ENCODE measurements at regions of chr13 and their contacts with region 1.

Region 1: DNA sequence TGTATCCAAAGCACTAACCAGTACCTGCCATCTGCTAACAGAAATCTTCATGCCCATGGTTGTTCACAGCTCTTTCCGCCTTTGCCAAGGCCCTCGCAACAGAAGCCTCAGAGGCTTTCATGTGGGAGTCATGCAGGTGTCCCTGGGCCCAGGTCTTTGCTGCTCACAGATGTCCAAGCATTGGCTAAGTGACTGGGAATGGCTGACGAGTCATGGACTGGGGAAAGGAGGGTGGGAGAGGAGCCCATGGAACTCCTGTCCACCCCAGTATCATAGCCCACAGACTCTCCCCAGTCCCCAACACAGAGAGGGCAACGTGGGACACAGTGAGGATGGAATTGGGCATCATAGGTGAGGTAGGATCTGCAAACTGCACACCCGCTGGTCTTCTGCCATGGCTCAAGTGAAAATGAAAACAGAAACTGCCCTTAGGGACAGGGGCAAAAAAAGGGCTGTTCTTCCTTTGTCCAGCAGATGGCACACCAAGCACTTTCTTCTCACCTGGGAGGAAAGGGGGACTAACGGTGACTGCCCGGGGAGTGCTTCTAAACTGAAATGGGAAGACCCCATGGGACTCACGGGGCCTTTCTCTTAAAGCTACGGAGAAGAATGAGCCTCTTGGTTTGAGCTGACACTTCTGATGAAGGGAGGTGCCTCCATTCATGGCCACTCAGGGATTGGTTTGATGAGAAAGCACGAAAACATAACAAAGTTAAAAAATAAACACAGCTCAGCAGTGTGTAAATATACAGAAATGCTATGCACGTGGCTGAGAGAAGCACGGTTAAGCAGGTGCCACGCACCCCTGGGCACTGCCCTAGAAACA is 11.1 kb upstream of the DHRS12 start:
- DNase-seq: peak; percentile 65
- H3K4me3 ChIP-seq: no peak overlapping the region
- H3K27ac ChIP-seq: no peak overlapping the region
- H3K4me1 ChIP-seq: no peaks in the 10 kb centered on the region
- H3K27me3 ChIP-seq: no peaks in the 10 kb centered on the region
- CTCF ChIP-seq: peak; percentile 69 to 81 (median 74)
- POLR2A ChIP-seq: no peak

Region 2: DNA sequence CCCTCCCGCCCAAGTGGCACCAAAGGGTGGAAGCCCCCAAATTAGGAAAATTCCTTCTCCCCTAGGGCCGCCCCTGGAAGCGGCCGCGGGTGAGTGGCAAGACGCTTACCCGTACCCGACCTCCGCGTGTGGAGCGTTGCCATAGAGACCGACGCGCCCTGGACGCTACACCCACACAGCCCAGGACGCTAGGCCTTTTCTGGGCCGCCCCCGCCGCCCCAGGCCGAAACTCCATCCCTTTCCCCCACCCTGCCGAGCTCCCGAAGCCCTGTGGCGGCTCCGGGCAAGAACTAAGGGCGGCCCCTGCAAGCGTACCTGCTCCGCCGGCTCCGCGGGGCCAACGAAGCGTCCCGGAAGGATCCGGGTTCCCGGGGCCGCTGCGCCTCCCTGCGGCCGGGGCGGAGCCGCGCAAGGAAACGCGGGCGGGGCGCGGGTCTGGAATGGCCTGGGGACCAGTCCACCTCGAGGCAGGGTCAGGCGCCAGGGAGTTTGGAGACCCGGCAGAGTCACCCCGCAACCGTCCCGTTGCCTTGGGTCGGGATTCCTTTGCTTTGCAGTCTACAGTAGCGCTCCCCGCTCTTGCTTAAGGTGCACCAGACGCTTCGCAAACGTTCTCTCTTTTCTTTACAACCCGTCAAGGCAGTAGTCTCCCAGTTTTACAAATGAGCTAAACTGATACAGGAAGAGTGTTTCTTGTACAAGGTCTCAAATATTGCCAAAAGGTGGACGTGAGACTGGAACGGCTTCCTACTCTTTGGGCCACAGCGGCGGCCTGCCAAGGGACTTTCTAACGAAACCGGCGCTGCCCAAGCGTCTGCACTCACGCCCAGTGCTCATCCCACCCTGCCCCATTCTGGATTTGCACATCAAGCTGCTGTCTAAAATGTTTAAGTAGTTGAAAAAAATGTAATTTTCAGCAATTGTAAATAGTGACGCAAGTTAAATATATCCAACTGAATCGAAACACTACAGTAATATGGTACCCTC is 314.0 kb after region 1 on chr13 and contains the start of gene NEK5:
- intact Hi-C with region 1: loop called (anchors 10 kb)
- DNase-seq: peak; percentile 47 to 49
- H3K4me3 ChIP-seq: peak within 1 kb of the TSS; percentile 49 to 64
- H3K27ac ChIP-seq: peak within 1 kb of the TSS; percentile 50
- H3K4me1 ChIP-seq: no peaks in the 10 kb centered on the region
- H3K27me3 ChIP-seq: no peaks in the 10 kb centered on the region
- CTCF ChIP-seq: peak; percentile 62 to 79 (median 71)
- POLR2A ChIP-seq: no peak
- total RNA-seq, gene NEK5: 0.76 to 7.9 (median 3.5) TPM